ENCODE measurements at regions of chr3 and their contacts with region 1.

Region 1: DNA sequence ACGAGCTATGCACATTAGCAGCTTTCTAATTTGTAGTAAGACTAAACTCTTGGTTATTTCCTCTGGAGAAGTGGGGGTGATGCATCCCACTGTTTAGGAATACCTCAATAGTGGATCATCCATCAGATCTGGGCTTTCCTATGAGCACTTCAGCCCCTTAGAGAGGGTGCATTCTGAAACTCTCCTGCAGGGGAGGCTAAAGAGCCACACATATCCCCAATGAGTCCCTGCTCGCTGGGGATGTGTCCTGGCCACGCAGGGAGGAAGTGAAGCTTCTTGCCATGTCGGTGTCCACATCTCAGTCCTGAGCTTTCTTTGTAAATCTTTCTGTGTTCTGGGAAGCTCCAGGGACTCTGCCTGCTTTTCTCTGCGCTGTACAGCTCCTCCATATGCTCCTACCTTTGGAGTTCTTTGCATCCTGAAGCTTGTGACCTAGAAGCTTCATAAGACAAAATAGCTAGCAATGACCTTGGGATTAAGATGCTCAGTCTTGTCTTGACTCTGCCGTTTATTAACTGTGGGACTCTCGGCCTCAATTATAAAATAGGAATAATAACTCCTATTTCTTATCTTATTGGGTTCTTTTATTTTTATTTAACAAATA is 28.3 kb upstream of the MASP1 start:
- DNase-seq: peak; percentile 17
- ATAC-seq: peak; percentile 97
- H3K4me3 ChIP-seq: no peak overlapping the region
- H3K27ac ChIP-seq: no peak overlapping the region
- H3K4me1 ChIP-seq: no peaks in the 10 kb centered on the region
- H3K27me3 ChIP-seq: peaks cover 0 to 1% of the 10 kb centered on the region in 2 experiments; a peak in 1 of 4 replicates
- CTCF ChIP-seq: peak; percentile 80 to 97 (median 94)
- EP300 ChIP-seq: no peak
- POLR2A ChIP-seq: no peak
- RAD21 ChIP-seq: peak; percentile 82

Region 2: DNA sequence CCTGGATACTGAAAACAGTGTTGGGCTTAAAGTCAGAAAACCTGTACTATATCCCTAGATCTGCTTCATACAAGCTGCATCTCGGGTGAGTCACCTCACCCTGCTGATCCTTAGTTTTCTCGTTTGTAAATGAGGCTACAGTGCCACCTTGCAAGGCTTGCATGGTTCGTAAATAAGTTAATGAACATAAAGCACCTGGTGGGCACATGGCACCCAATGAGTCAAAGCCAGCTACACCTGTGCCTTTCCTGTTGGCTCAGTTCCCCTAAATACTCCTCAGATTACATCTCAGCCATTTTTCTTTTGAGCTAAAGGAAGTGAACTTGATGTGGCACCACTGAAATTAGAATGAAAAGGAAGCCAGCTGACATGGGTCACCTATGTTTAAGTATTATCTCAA is 96.0 kb before region 1 on chr3:
- CTCF ChIA-PET with region 1: interaction called, 12 read pairs
- POLR2A ChIA-PET with region 1: no interaction called
- RAD21 ChIA-PET with region 1: interaction called, 4 read pairs
- SMC1A ChIA-PET with region 1: interaction called, 6 read pairs
- in situ Hi-C with region 1: no loop called
- intact Hi-C with region 1: loop called (anchors 1 kb)
- DNase-seq: no peak
- ATAC-seq: no peak
- H3K4me3 ChIP-seq: no peak overlapping the region
- H3K27ac ChIP-seq: no peak overlapping the region
- H3K4me1 ChIP-seq: no peaks in the 10 kb centered on the region
- H3K27me3 ChIP-seq: peaks cover 0 to 5% of the 10 kb centered on the region in 2 experiments; a peak in 3 of 4 replicates
- CTCF ChIP-seq: no peak
- EP300 ChIP-seq: no peak
- POLR2A ChIP-seq: no peak
- RAD21 ChIP-seq: no peak

Region 3: DNA sequence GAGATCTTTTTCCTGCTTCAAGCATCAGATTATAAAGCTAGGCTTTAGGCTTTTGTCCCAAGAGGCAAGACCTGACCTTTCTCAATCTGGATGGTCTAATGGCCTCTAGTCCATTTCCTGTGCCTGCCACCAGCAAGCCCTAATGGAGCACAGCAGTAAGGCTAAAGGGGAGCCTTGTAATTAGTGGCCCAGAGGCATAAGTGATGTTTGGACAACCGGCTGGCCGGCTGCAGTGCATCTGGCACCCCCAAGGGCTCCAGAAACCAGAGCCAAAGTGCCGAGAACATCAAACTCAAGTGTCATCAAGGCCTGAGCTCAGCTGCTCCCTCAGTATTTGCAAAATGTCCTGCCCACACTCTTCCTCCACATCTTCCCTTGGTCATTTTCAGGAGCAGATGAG is 16.5 kb after region 1 on chr3:
- CTCF ChIA-PET with region 1: interaction called, 21 read pairs
- POLR2A ChIA-PET with region 1: no interaction called
- RAD21 ChIA-PET with region 1: no interaction called
- SMC1A ChIA-PET with region 1: interaction called, 5 read pairs
- in situ Hi-C with region 1: no loop called
- intact Hi-C with region 1: no loop called
- DNase-seq: no peak
- ATAC-seq: no peak
- H3K4me3 ChIP-seq: no peak overlapping the region
- H3K27ac ChIP-seq: no peak overlapping the region
- H3K4me1 ChIP-seq: no peaks in the 10 kb centered on the region
- H3K27me3 ChIP-seq: peaks cover 0 to 4% of the 10 kb centered on the region in 2 experiments; a peak in 1 of 4 replicates
- CTCF ChIP-seq: no peak
- EP300 ChIP-seq: no peak
- POLR2A ChIP-seq: no peak
- RAD21 ChIP-seq: no peak

Region 4: DNA sequence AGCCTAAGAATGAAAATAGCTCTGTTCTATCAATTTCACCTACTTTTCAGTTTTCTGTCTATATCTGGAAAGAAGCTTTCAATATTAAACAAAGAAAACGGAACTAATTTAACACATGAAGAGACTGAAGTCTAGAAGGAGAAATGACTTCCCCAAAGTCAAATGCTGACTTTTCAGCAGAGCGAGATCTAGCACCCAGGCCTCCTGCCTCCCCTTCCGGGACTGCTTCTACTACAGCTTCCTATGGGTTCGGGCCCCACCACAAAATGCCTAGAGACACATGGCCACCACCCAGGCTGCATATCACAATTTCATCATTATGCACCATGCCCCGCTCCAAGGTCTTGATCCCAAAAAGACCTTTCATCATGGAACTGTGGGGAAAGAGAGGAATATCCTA is 245.9 kb after region 1 on chr3:
- CTCF ChIA-PET with region 1: interaction called, 15 read pairs
- POLR2A ChIA-PET with region 1: no interaction called
- RAD21 ChIA-PET with region 1: no interaction called
- SMC1A ChIA-PET with region 1: no interaction called
- in situ Hi-C with region 1: no loop called
- intact Hi-C with region 1: no loop called
- DNase-seq: no peak
- ATAC-seq: no peak
- H3K4me3 ChIP-seq: no peak overlapping the region
- H3K27ac ChIP-seq: no peak overlapping the region
- H3K4me1 ChIP-seq: no peaks in the 10 kb centered on the region
- H3K27me3 ChIP-seq: no peaks in the 10 kb centered on the region
- CTCF ChIP-seq: no peak
- EP300 ChIP-seq: no peak
- POLR2A ChIP-seq: no peak
- RAD21 ChIP-seq: no peak

Region 5: DNA sequence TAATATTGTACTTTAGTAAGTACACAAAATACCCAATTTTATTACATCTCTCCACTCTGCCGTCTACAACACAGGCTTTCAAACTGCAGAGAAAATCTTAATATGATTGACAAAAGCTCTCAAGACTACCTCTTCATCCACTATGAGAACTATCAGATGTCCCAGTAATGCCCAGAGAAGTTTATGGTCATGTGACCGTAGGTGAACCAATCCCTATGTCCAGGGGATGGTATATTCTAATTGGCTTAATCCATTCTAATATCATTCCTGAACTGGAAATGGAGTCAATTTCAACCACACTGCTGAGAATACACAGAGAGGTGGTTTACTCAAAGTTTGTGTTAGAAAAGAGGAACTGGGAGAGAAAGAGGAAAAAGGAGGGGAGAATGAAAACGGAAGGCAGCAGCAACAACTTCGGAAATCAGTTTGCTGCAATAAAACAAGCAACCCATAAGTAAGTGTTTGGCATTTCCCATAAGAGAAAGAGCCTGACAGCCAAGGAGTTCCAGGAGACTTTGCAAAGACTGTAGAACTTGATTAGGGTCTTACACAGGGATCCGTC is 343.1 kb after region 1 on chr3:
- CTCF ChIA-PET with region 1: interaction called, 519 read pairs
- POLR2A ChIA-PET with region 1: no interaction called
- RAD21 ChIA-PET with region 1: interaction called, 3 read pairs
- SMC1A ChIA-PET with region 1: interaction called, 5 read pairs
- in situ Hi-C with region 1: no loop called
- intact Hi-C with region 1: no loop called
- DNase-seq: no peak
- ATAC-seq: no peak
- H3K4me3 ChIP-seq: no peak overlapping the region
- H3K27ac ChIP-seq: no peak overlapping the region
- H3K4me1 ChIP-seq: no peaks in the 10 kb centered on the region
- H3K27me3 ChIP-seq: peaks cover 0 to 6% of the 10 kb centered on the region in 2 experiments; a peak in 2 of 4 replicates
- CTCF ChIP-seq: no peak
- EP300 ChIP-seq: no peak
- POLR2A ChIP-seq: no peak
- RAD21 ChIP-seq: no peak

Region 6: GRCh38 chr3:187706971-187707370 is 387.2 kb after region 1 on chr3:
- CTCF ChIA-PET with region 1: interaction called, 54 read pairs
- POLR2A ChIA-PET with region 1: no interaction called
- RAD21 ChIA-PET with region 1: interaction called, 3 read pairs
- SMC1A ChIA-PET with region 1: interaction called, 3 read pairs
- in situ Hi-C with region 1: no loop called
- intact Hi-C with region 1: no loop called
- DNase-seq: no peak
- ATAC-seq: no peak
- H3K4me3 ChIP-seq: no peak overlapping the region
- H3K27ac ChIP-seq: no peak overlapping the region
- H3K4me1 ChIP-seq: no peaks in the 10 kb centered on the region
- H3K27me3 ChIP-seq: peaks cover 0 to 2% of the 10 kb centered on the region in 2 experiments; a peak in 1 of 4 replicates
- CTCF ChIP-seq: no peak
- EP300 ChIP-seq: no peak
- POLR2A ChIP-seq: no peak
- RAD21 ChIP-seq: no peak

Region 7: DNA sequence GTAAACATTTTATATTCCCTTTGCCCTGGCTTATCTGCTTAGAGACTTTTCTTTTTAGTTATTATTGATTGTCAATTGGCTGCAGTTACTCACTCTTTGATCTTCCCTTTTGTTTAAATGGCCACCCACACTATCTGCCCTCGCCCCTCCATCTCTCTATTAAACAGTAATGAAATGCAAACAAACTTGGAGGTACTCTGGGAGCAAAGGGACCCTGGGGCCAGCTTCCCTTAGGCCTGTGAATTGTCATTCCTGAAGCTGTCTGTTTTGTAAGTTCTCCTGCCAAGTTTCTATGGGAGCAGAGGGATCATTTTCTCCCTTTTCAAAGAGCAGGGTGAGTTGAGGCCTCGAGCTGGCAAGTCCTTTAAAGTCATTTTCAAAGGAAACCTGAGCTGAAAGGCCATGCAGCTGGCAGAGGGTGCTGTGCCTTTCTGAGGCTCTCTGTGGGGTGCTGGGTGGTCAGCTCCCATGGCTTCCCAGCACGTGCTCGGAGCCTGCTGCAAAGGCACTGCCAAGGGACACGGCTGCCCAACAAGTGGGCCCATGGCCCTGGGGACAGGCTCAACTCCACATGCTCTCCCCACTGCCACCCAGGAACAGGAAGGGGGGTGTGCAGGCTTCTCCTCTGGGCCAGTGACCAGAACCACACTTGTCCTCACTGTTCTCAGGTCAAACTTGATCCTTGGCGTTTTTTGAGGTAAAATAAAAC is 400.0 kb after region 1 on chr3:
- CTCF ChIA-PET with region 1: interaction called, 54 read pairs
- POLR2A ChIA-PET with region 1: no interaction called
- RAD21 ChIA-PET with region 1: interaction called, 31 read pairs
- SMC1A ChIA-PET with region 1: interaction called, 22 read pairs
- in situ Hi-C with region 1: loop called (anchors 5 kb)
- intact Hi-C with region 1: loop called (anchors 1 kb)
- DNase-seq: no peak
- ATAC-seq: no peak
- H3K4me3 ChIP-seq: no peak overlapping the region
- H3K27ac ChIP-seq: no peak overlapping the region
- H3K4me1 ChIP-seq: no peaks in the 10 kb centered on the region
- H3K27me3 ChIP-seq: no peaks in the 10 kb centered on the region
- CTCF ChIP-seq: no peak
- EP300 ChIP-seq: no peak
- POLR2A ChIP-seq: no peak
- RAD21 ChIP-seq: no peak

Measured in GM12878 (cell line).